CD8-positive, alpha-beta T cell (primary cell): ENCODE measurements at regions of chr1 and their contacts with region 1.

Region 1: DNA sequence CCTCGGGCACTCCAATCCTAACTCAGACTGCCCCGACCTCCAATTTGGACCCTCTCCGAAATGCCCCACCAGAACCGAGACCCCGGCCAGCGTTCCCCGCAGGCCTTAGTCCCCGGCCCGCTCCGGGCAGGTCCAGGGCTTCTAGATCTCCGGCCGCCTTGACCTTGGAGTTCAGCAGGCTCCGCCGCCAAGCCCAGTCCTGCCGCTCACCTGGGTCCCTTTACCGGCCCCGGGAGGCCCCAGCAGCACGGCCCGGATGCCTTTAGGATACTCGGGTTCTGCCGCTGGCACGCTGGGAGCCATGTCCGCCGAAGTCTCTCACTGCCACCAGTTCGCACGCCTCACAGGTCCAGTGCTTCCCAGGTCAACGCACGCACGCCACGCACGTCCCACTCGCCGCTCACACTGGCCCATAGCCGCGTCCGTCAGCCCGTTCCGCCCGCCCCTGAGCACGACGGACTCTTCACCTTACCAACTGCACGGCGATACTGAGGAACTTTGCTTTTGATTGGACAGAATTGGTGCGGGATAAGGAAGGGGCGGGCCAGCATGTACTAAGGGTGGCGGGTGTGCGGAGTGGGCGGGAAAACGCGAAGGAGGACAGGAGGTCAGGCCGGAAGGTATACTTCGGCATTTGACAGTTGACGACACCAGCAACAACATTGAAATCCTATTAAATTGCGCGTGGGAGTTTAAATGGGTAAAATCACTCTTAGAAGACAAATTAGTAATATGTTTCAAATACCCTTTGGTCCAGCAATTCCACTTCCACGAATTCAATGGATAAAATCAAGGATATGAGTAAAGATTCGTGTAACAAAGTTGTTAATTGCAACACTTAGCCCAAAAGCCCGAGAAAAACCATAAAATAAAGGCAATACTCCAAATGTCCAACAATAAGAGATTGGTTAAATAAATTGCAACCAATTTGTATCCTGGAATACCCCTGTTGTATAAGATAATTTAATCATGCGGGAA is at the start of gene AK2:
- DNase-seq: peak; percentile 72 to 95 (median 86)
- ATAC-seq: peak; percentile 99
- H3K4me3 ChIP-seq: peak within 1 kb of the TSS; percentile 87 to 92
- H3K4me3 Mint-ChIP-seq: peak within 1 kb of the TSS; percentile 98
- H3K27ac ChIP-seq: peak within 1 kb of the TSS; percentile 57 to 76
- H3K27ac Mint-ChIP-seq: peak within 1 kb of the TSS; percentile 92
- H3K4me1 ChIP-seq: peaks cover 24% of the 10 kb centered on the region
- H3K4me1 Mint-ChIP-seq: peaks cover 45% of the 10 kb centered on the region
- H3K27me3 ChIP-seq: no peaks in the 10 kb centered on the region
- H3K27me3 Mint-ChIP-seq: no peaks in the 10 kb centered on the region
- CTCF ChIP-seq: no peak
- total RNA-seq, gene AK2: 24.3 to 24.9 TPM

Region 2: DNA sequence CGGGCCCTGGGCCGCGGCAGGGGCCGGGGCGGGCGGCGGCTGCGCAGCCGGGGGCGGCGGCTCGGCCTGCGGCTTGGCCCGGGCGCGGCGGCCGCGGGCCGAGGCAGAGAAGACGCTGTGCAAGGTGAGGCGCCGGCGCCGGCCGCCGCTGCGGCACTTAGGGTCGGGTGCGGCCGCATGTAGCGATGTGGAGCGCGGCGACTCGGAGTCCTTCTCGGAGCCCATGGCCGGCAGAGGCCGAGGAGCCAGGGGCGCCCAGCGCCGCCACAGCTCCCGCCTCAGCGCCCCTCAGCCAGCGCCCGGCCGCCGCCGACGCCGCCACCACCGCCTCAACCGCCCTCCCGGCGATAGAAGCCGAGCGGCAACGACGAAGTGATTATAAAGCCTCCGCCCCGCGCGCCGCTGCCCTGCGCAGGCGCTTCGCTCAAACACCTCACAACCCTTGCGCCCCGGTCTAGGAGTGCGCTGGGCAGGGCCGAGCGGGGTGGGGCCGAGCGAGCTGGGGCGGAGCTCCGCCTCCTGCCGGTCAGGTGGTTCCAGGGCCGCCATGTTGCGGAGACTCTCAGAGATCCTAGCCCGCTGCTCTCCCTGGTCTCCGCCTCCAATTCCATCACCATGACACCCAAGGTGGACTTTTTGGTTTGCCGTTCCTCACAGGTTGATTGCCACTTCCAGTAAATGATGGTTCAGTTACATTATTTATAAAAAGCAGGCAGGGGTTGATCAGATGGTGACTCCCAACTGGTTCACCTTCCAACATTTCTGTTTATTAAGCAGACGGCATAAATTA is 72.2 kb before region 1 on chr1 and contains the start of gene RNF19B:
- CTCF ChIA-PET with region 1: no interaction called
- POLR2A ChIA-PET with region 1: no interaction called
- intact Hi-C with region 1: loop called (anchors 1 to 2 kb)
- DNase-seq: peak; percentile 89 to 97 (median 93)
- ATAC-seq: peak; percentile 93
- H3K4me3 ChIP-seq: peak within 1 kb of the TSS; percentile 68 to 70
- H3K4me3 Mint-ChIP-seq: peak within 1 kb of the TSS; percentile 88
- H3K27ac ChIP-seq: peak within 1 kb of the TSS; percentile 51 to 75
- H3K27ac Mint-ChIP-seq: peak within 1 kb of the TSS; percentile 91
- H3K4me1 ChIP-seq: peaks cover 24% of the 10 kb centered on the region
- H3K4me1 Mint-ChIP-seq: peaks cover 38% of the 10 kb centered on the region
- H3K27me3 ChIP-seq: peaks cover 0 to 3% of the 10 kb centered on the region in 2 experiments
- H3K27me3 Mint-ChIP-seq: no peaks in the 10 kb centered on the region
- CTCF ChIP-seq: no peak
- total RNA-seq, gene RNF19B: 43.9 to 44.6 TPM

Region 3: DNA sequence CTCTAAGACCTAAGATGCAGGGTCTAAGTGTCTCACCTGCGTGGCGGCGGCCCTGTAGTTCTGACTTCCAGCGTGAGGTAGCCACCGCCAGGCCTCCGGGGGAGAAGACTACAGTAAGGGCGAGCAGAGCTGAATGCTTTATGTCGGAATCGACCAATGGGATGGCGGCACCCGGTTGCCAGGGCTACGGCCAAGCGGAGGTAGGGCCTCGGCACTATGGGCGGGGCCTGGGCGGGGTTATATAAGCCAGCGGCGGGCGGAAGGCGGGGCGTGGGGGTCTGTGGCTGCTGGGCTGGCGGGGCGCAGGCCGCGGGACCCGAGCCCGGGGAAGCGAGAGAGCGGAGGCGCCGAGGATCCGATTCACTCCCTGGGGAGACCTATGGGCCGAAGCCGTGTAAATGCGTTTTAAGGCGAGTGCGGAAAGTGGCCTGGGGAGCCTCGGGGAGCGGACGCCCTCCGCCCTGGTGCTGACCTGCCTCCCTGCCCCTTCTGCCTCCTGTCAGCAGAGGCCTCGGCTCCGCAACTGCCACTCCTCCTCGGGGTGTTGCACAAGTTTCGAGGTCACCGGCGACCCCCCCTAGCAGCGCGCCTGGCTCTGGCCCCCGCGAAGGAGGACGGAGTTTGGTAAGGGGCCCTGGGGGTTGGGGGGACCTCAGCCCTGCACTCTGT is 44.2 kb after region 1 on chr1 and contains the start of gene AZIN2:
- CTCF ChIA-PET with region 1: no interaction called
- POLR2A ChIA-PET with region 1: no interaction called
- intact Hi-C with region 1: loop called in 1 of 2 experiments (anchors 1 kb)
- DNase-seq: peak; percentile 92 to 100 (median 97)
- ATAC-seq: peak; percentile 99
- H3K4me3 ChIP-seq: peak within 1 kb of the TSS; percentile 57 to 89
- H3K4me3 Mint-ChIP-seq: peak within 1 kb of the TSS; percentile 82
- H3K27ac ChIP-seq: peak within 1 kb of the TSS; percentile 28 to 54
- H3K27ac Mint-ChIP-seq: peak within 1 kb of the TSS; percentile 82
- H3K4me1 ChIP-seq: peaks cover 22% of the 10 kb centered on the region
- H3K4me1 Mint-ChIP-seq: peaks cover 29% of the 10 kb centered on the region
- H3K27me3 ChIP-seq: peaks cover 0 to 2% of the 10 kb centered on the region in 2 experiments
- H3K27me3 Mint-ChIP-seq: no peaks in the 10 kb centered on the region
- CTCF ChIP-seq: no peak
- total RNA-seq, gene AZIN2: 3.5 to 4.1 TPM

Region 4: DNA sequence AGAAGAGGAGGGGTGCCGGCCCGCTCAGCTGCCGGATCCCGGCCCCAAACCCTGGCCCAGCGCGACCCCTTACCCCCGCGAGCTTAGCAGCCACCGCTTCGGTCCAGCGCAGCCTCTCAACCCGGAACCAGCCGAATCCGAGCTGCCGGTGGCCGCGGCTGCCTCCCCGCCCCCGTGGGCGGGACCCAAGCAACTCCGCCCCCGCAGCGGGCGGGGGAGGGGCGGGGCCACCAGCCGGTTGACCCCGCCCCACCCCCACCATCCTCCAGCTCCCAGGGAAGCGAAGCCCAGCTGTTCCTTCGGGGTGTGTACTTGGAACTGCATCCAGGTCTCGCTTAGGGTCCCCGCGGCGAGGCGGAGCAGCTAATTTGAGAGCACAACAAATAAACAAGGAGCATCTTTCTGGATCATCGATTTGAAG is 145.1 kb after region 1 on chr1 and contains the start of gene TRIM62:
- CTCF ChIA-PET with region 1: no interaction called
- POLR2A ChIA-PET with region 1: no interaction called
- intact Hi-C with region 1: loop called (anchors 5 kb)
- DNase-seq: peak; percentile 48 to 88 (median 74)
- ATAC-seq: peak; percentile 74
- H3K4me3 ChIP-seq: peak within 1 kb of the TSS; percentile 82 to 85
- H3K4me3 Mint-ChIP-seq: peak within 1 kb of the TSS; percentile 88
- H3K27ac ChIP-seq: peak within 1 kb of the TSS in 1 of 2 experiments; percentile 36
- H3K27ac Mint-ChIP-seq: peak within 1 kb of the TSS; percentile 74
- H3K4me1 ChIP-seq: peaks cover 22% of the 10 kb centered on the region
- H3K4me1 Mint-ChIP-seq: peaks cover 31% of the 10 kb centered on the region
- H3K27me3 ChIP-seq: no peaks in the 10 kb centered on the region
- H3K27me3 Mint-ChIP-seq: peaks cover 6% of the 10 kb centered on the region
- CTCF ChIP-seq: no peak
- total RNA-seq, gene TRIM62: 14.3 to 14.8 TPM